CD4-positive, alpha-beta T cell (primary cell): ENCODE measurements at regions of chr15 and their contacts with region 1.

Region 1: DNA sequence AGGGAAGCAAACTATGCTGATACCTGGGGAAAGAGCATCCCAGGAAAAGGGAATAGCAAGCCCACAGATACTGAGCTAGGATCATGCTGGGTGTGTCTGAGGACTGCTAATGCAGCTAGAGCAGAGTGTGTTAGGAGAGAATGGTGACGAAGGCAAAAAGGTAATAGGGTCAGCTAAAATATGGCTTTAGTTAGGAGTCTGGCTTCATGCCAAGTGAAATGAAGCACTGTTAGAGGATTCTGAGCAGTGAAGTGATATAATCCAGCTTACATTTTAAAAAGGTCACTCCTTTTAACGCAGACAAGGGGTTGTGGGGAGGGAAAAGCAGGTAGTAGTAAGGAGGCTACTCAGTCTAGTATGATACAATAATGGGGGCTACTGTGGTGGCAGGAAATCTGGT is 30.4 kb downstream of the SECISBP2L start:
- DNase-seq: no peak
- ATAC-seq: no peak
- H3K4me3 ChIP-seq: no peak overlapping the region
- H3K4me3 Mint-ChIP-seq: no peak overlapping the region
- H3K27ac ChIP-seq: no peak overlapping the region
- H3K27ac Mint-ChIP-seq: no peak overlapping the region
- H3K4me1 ChIP-seq: no peaks in the 10 kb centered on the region
- H3K4me1 Mint-ChIP-seq: no peaks in the 10 kb centered on the region
- H3K27me3 ChIP-seq: no peaks in the 10 kb centered on the region
- H3K27me3 Mint-ChIP-seq: no peaks in the 10 kb centered on the region
- CTCF ChIP-seq: no peak

Region 2: GRCh38 chr15:48996276-48996675 is 19.6 kb before region 1 on chr15:
- CTCF ChIA-PET with region 1: no interaction called
- POLR2A ChIA-PET with region 1: no interaction called
- intact Hi-C with region 1: loop called in 1 of 2 experiments (anchors 1 kb)
- DNase-seq: no peak
- ATAC-seq: no peak
- H3K4me3 ChIP-seq: no peak overlapping the region
- H3K4me3 Mint-ChIP-seq: no peak overlapping the region
- H3K27ac ChIP-seq: no peak overlapping the region
- H3K27ac Mint-ChIP-seq: no peak overlapping the region
- H3K4me1 ChIP-seq: no peaks in the 10 kb centered on the region
- H3K4me1 Mint-ChIP-seq: no peaks in the 10 kb centered on the region
- H3K27me3 ChIP-seq: no peaks in the 10 kb centered on the region
- H3K27me3 Mint-ChIP-seq: no peaks in the 10 kb centered on the region
- CTCF ChIP-seq: no peak